Transverse colon (tissue), 4 donors: ENCODE measurements at regions of chr4 and their contacts with region 1.

Region 1: GRCh38 chr4:123580981-123581664 is 184.5 kb downstream of the SPRY1 start:
- DNase-seq: no peak
- H3K4me3 ChIP-seq: no peak overlapping the region
- H3K27ac ChIP-seq: no peak overlapping the region
- H3K4me1 ChIP-seq: no peaks in the 10 kb centered on the region
- H3K27me3 ChIP-seq: no peaks in the 10 kb centered on the region
- CTCF ChIP-seq: no peak
- EP300 ChIP-seq: no peak
- POLR2A ChIP-seq: no peak

Region 2: GRCh38 chr4:123325241-123325681 is 255.9 kb before region 1 on chr4:
- in situ Hi-C with region 1: no loop called
- intact Hi-C with region 1: no loop called
- DNase-seq: no peak
- H3K4me3 ChIP-seq: no peak overlapping the region
- H3K27ac ChIP-seq: no peak overlapping the region
- H3K4me1 ChIP-seq: no peaks in the 10 kb centered on the region
- H3K27me3 ChIP-seq: no peaks in the 10 kb centered on the region
- CTCF ChIP-seq: no peak
- EP300 ChIP-seq: no peak
- POLR2A ChIP-seq: no peak

Region 3: DNA sequence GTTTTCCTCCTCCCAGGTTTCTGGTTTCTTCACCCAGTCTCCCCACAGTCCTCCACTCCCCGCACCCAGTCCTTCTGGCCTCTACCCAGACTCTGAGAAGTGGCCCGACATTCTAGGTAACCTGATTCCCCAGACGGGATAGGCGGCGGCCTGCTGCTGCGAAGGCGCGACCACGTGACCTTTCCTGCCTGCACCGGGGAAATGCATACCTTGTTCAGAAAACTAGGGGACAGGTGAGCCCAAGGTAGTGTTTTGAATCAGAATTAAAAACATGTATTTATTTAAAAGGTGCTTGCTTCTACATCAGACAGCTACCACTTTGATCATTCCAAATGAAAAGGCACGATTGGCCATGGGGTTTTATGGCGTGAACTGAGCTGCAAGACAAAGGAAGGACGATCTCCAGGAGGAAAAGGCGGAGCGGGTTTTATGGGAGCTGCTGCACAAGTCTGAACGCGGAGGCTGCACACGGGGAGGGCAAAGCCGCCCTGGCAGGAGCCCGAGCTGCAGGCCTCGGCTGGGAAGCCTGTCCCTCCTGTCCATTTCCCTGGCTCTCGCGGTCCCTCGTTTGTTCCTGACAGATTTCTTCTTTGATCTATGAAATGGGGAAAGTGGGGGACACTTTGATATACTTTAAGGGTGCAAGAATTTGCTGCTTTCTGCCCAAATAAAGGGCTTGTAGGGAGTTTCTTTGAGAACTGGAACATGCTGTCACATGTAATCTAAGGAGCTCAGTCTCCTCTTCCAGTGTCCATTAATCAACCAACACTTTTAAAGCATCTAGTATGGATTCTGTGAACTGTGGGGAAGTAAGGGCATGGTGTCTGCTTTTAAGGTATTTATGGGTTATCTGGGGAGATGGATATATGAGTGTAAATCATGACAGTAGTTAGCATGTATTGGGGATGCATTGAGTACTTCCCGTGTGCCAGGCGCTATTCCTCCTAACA is 33.6 kb before region 1 on chr4:
- in situ Hi-C with region 1: no loop called
- intact Hi-C with region 1: no loop called
- DNase-seq: peak; percentile 78
- H3K4me3 ChIP-seq: peak overlapping the region in 1 of 4 donors; percentile 5
- H3K27ac ChIP-seq: peak overlapping the region; percentile 77 to 83 (median 80)
- H3K4me1 ChIP-seq: peaks cover 0 to 41% (median 24%) of the 10 kb centered on the region in 4 donors
- H3K27me3 ChIP-seq: no peaks in the 10 kb centered on the region
- CTCF ChIP-seq: no peak
- EP300 ChIP-seq: no peak
- POLR2A ChIP-seq: peak; percentile 56

Region 4: GRCh38 chr4:123843137-123843536 is 262.0 kb after region 1 on chr4:
- in situ Hi-C with region 1: no loop called
- intact Hi-C with region 1: loop called (anchors 5 kb)
- DNase-seq: no peak
- H3K4me3 ChIP-seq: no peak overlapping the region
- H3K27ac ChIP-seq: no peak overlapping the region
- H3K4me1 ChIP-seq: peaks cover 0 to 3% (median 0%) of the 10 kb centered on the region in 4 donors
- H3K27me3 ChIP-seq: no peaks in the 10 kb centered on the region
- CTCF ChIP-seq: no peak
- EP300 ChIP-seq: no peak
- POLR2A ChIP-seq: no peak